K562 (cell line): ENCODE measurements at regions of chr15 and their contacts with region 1.

Region 1: DNA sequence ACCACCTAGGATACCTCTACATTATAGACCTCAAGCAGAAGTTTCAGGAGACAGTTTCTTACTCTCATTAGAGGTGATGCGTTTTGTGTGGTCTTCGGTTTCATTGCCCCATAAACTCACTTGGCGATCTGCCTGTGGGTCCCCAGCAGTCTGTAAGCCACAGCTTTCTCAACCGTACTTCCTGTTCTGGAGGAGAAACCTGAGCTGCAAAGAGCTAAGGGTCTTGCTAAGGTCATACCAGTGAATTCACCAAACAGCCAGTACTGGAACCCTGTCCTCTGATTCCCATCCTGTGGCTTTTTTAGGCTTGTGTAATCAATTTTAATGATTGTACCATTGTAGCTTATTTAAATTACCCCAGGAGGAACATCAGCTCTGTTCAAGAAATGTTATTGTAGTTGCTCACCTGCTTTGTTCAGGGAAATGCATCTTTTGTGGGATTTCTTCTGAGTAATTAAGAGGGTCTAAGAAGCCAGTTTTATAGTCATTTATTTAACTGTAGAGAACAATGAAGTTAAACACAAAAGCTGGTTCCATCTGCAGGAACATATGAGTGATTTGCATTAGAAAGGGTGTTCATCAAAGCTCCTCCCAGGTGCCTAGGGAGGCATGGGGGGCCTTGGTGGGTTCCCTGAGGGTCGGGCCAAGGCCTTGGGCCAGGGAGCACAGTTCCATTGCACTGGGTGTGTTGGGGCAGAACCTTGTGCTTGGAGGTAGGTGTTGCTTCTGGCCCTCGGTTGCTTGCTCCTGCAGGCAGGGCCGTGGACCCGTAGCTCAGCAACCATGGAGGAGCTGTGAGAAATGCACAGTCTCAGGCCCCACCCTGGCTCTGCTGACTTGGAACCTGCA is 69.6 kb downstream of the APBA2 start:
- DNase-seq: peak in 2 of 4 experiments; percentile 66 to 84
- ATAC-seq: peak; percentile 88
- H3K4me3 ChIP-seq: peak overlapping the region; percentile 1; the same call in 1 of the 2 replicates
- H3K27ac ChIP-seq: peak overlapping the region; percentile 80
- H3K4me1 ChIP-seq: peaks cover 37 to 46% of the 10 kb centered on the region in 2 experiments
- H3K27me3 ChIP-seq: no peaks in the 10 kb centered on the region
- CTCF ChIP-seq: no peak
- EP300 ChIP-seq: peak; percentile 82
- POLR2A ChIP-seq: no peak
- RAD21 ChIP-seq: no peak

Region 2: DNA sequence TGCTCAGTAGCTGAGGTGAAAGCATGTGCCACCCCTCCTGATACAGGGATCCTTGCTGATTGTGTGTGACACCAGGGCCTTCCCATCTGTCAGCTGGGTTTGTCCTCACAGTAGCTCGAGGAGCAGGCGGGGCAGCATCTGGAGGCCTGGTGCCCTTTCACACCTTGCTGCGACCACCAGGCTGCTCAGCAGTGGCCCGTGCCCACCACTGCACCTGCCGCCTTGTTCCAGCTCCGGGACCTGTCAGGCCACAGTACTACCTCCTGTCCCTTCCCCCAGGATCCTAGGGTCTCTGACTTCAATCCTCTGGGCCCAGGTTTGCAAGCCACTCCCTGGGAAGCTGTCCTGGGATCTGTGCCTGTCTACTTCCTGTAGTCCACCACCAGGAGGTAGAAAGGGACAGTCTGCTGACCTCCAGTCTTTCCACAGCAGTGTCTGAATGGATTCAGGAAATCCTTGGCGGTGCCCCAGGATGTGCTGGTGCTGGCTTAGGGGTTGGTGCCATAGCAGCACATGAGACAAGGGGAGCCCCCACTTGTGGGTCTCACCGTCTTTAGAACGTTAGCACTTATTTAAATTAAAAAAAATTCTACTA is 42.1 kb before region 1 on chr15:
- CTCF ChIA-PET with region 1: no interaction called
- POLR2A ChIA-PET with region 1: interaction called, 3 read pairs
- in situ Hi-C with region 1: no loop called
- intact Hi-C with region 1: loop called (anchors 5 kb)
- DNase-seq: no peak
- ATAC-seq: peak; percentile 21
- H3K4me3 ChIP-seq: no peak overlapping the region
- H3K27ac ChIP-seq: peak overlapping the region; percentile 76; the same call in 1 of the 3 replicates
- H3K4me1 ChIP-seq: peaks cover 57 to 62% of the 10 kb centered on the region in 2 experiments
- H3K27me3 ChIP-seq: no peaks in the 10 kb centered on the region
- CTCF ChIP-seq: peak; percentile 11 to 25 (median 22); a peak in 1 of 6 replicates
- EP300 ChIP-seq: no peak
- POLR2A ChIP-seq: no peak
- RAD21 ChIP-seq: peak in 1 of 2 experiments; percentile 39; a peak in 1 of 4 replicates

Region 3: GRCh38 chr15:28969511-28970085 is 14.2 kb after region 1 on chr15:
- CTCF ChIA-PET with region 1: no interaction called
- POLR2A ChIA-PET with region 1: interaction called, 11 read pairs
- in situ Hi-C with region 1: no loop called
- intact Hi-C with region 1: no loop called
- DNase-seq: peak in 1 of 4 experiments; percentile 16
- ATAC-seq: peak; percentile 47; the same call in 2 of the 3 replicates
- H3K4me3 ChIP-seq: no peak overlapping the region
- H3K27ac ChIP-seq: peak overlapping the region; percentile 64; the same call in 2 of the 3 replicates
- H3K4me1 ChIP-seq: peaks cover 20 to 29% of the 10 kb centered on the region in 2 experiments
- H3K27me3 ChIP-seq: no peaks in the 10 kb centered on the region
- CTCF ChIP-seq: no peak
- EP300 ChIP-seq: no peak
- POLR2A ChIP-seq: no peak
- RAD21 ChIP-seq: no peak

Region 4: GRCh38 chr15:29008846-29009245 is 53.5 kb after region 1 on chr15:
- CTCF ChIA-PET with region 1: no interaction called
- POLR2A ChIA-PET with region 1: no interaction called
- in situ Hi-C with region 1: no loop called
- intact Hi-C with region 1: no loop called
- DNase-seq: no peak
- ATAC-seq: no peak
- H3K4me3 ChIP-seq: no peak overlapping the region
- H3K27ac ChIP-seq: no peak overlapping the region
- H3K4me1 ChIP-seq: peaks cover 0 to 3% of the 10 kb centered on the region in 2 experiments; a peak in 1 of 5 replicates
- H3K27me3 ChIP-seq: no peaks in the 10 kb centered on the region
- CTCF ChIP-seq: no peak
- EP300 ChIP-seq: no peak
- POLR2A ChIP-seq: no peak
- RAD21 ChIP-seq: no peak